Naive thymus-derived CD8-positive, alpha-beta T cell (primary cell): ENCODE measurements at regions of chr16 and their contacts with region 1.

Region 1: GRCh38 chr16:67159593-67160406 is at the starts of genes FBXL8 and TRADD:
- DNase-seq: peak; percentile 63 to 85 (median 78)
- ATAC-seq: peak; percentile 75 to 78
- H3K4me3 Mint-ChIP-seq: peak within 1 kb of the TSS; percentile 76 to 92 (median 89)
- H3K27ac Mint-ChIP-seq: peak within 1 kb of the TSS; percentile 84 to 99 (median 93)
- H3K4me1 Mint-ChIP-seq: peaks cover 28 to 69% (median 45%) of the 10 kb centered on the region in 4 donors
- H3K27me3 Mint-ChIP-seq: peaks cover 5 to 35% (median 8%) of the 10 kb centered on the region in 5 donors
- polyA plus RNA-seq, gene FBXL8: 1.8 to 2.8 (median 2.5) TPM
- polyA plus RNA-seq, gene TRADD: 44.9 to 49.1 (median 48.2) TPM

Region 2: GRCh38 chr16:67112591-67113399 is 47.0 kb before region 1 on chr16:
- POLR2A ChIA-PET with region 1: interaction called, 11 read pairs
- DNase-seq: no peak
- ATAC-seq: no peak
- H3K4me3 Mint-ChIP-seq: no peak overlapping the region
- H3K27ac Mint-ChIP-seq: peak overlapping the region in 3 of 10 donors; percentile 26 to 74 (median 58)
- H3K4me1 Mint-ChIP-seq: peaks cover 26 to 62% (median 49%) of the 10 kb centered on the region in 4 donors
- H3K27me3 Mint-ChIP-seq: no peaks in the 10 kb centered on the region

Region 3: GRCh38 chr16:67170168-67170947 is 10.6 kb after region 1 on chr16 and contains the start of gene NOL3:
- POLR2A ChIA-PET with region 1: interaction called, 20 read pairs
- DNase-seq: no peak
- ATAC-seq: no peak
- H3K4me3 Mint-ChIP-seq: peak within 1 kb of the TSS; percentile 54 to 78 (median 68)
- H3K27ac Mint-ChIP-seq: peak within 1 kb of the TSS in 1 of 10 donors; percentile 27
- H3K4me1 Mint-ChIP-seq: peaks cover 18 to 34% (median 28%) of the 10 kb centered on the region in 4 donors
- H3K27me3 Mint-ChIP-seq: peaks cover 31 to 83% (median 54%) of the 10 kb centered on the region in 5 donors
- polyA plus RNA-seq, gene NOL3: not detected

Region 4: GRCh38 chr16:67183627-67184328 is 24.0 kb after region 1 on chr16 and contains the start of gene MATCAP1:
- POLR2A ChIA-PET with region 1: interaction called, 15 read pairs
- DNase-seq: peak; percentile 82 to 97 (median 94)
- ATAC-seq: peak; percentile 91 to 95
- H3K4me3 Mint-ChIP-seq: peak within 1 kb of the TSS in 6 of 10 donors; percentile 55 to 90 (median 80)
- H3K27ac Mint-ChIP-seq: peak within 1 kb of the TSS in 5 of 10 donors; percentile 15 to 89 (median 66)
- H3K4me1 Mint-ChIP-seq: peaks cover 10 to 16% (median 12%) of the 10 kb centered on the region in 4 donors
- H3K27me3 Mint-ChIP-seq: peaks cover 2 to 12% (median 8%) of the 10 kb centered on the region in 5 donors
- polyA plus RNA-seq, gene MATCAP1: 0.28 to 0.98 (median 0.75) TPM